Activated T-helper 1 cell treated with anti-CD3 and anti-CD28 coated beads, Interleukin-12 subunit alpha, Interleukin-12 subunit beta, Interleukin-2, Interleukin-4 antibody, amounts not matched to agents 30 ng/mL and 10 ng/mL and 1 ng/mL, durations not matched to agents 14 hours and 24 hours and 36 hours (primary cell): ENCODE measurements at regions of chr19 and their contacts with region 1.

Region 1: GRCh38 chr19:40690693-40691420 is 406 bp upstream of the NUMBL start:
- DNase-seq: peak; percentile 80
- H3K4me3 Mint-ChIP-seq: peak overlapping the region; percentile 87
- H3K27ac Mint-ChIP-seq: peak overlapping the region; percentile 84
- H3K4me1 Mint-ChIP-seq: no peaks in the 10 kb centered on the region
- H3K27me3 Mint-ChIP-seq: no peaks in the 10 kb centered on the region

Region 2: GRCh38 chr19:39655613-39656012 is 1035.2 kb before region 1 on chr19 and contains the start of gene LGALS16:
- intact Hi-C with region 1: no loop called
- DNase-seq: no peak
- H3K4me3 Mint-ChIP-seq: no peak within 1 kb of the TSS
- H3K27ac Mint-ChIP-seq: no peak within 1 kb of the TSS
- H3K4me1 Mint-ChIP-seq: no peaks in the 10 kb centered on the region
- H3K27me3 Mint-ChIP-seq: peaks cover 14% of the 10 kb centered on the region
- total RNA-seq, gene LGALS16: not detected in 2 replicates

Region 3: GRCh38 chr19:40609561-40610395 is 81.1 kb before region 1 on chr19:
- intact Hi-C with region 1: loop called (anchors 2 kb)
- DNase-seq: peak; percentile 86
- H3K4me3 Mint-ChIP-seq: peak overlapping the region; percentile 81
- H3K27ac Mint-ChIP-seq: peak overlapping the region; percentile 86
- H3K4me1 Mint-ChIP-seq: peaks cover 44% of the 10 kb centered on the region
- H3K27me3 Mint-ChIP-seq: no peaks in the 10 kb centered on the region

Region 4: GRCh38 chr19:40716655-40717324 is 25.9 kb after region 1 on chr19 and contains the starts of genes COQ8B and ITPKC:
- intact Hi-C with region 1: loop called (anchors 1 kb)
- DNase-seq: peak; percentile 100
- H3K4me3 Mint-ChIP-seq: peak within 1 kb of the TSS; percentile 97
- H3K27ac Mint-ChIP-seq: peak within 1 kb of the TSS; percentile 95
- H3K4me1 Mint-ChIP-seq: peaks cover 44% of the 10 kb centered on the region
- H3K27me3 Mint-ChIP-seq: no peaks in the 10 kb centered on the region
- total RNA-seq, gene COQ8B: 38.4 and 41.6 TPM in 2 replicates
- total RNA-seq, gene ITPKC: 8.7 and 9.9 TPM in 2 replicates